ENCODE measurements at regions of chr10 and their contacts with region 1.

Region 1: GRCh38 chr10:5014936-5015335 is 11.3 kb upstream of the AKR1C2 start:
- DNase-seq: peak; percentile 48 to 60
- H3K4me3 ChIP-seq: no peak overlapping the region
- H3K4me3 Mint-ChIP-seq: no peak overlapping the region
- H3K27ac Mint-ChIP-seq: no peak overlapping the region
- H3K4me1 ChIP-seq: 0 out of 2 replicates have a peak, but pooled peaks cover 1% of the 10 kb centered on the region
- H3K4me1 Mint-ChIP-seq: no peaks in the 10 kb centered on the region
- H3K27me3 ChIP-seq: no peaks in the 10 kb centered on the region
- H3K27me3 Mint-ChIP-seq: no peaks in the 10 kb centered on the region
- CTCF ChIP-seq: peak; percentile 55 to 67

Region 2: GRCh38 chr10:5043716-5044115 is 28.8 kb after region 1 on chr10:
- CTCF ChIA-PET with region 1: no interaction called
- POLR2A ChIA-PET with region 1: no interaction called
- intact Hi-C with region 1: no loop called
- DNase-seq: no peak
- H3K4me3 ChIP-seq: no peak overlapping the region
- H3K4me3 Mint-ChIP-seq: no peak overlapping the region
- H3K27ac Mint-ChIP-seq: no peak overlapping the region
- H3K4me1 ChIP-seq: peaks cover 7% of the 10 kb centered on the region
- H3K4me1 Mint-ChIP-seq: peaks cover 18% of the 10 kb centered on the region
- H3K27me3 ChIP-seq: no peaks in the 10 kb centered on the region
- H3K27me3 Mint-ChIP-seq: no peaks in the 10 kb centered on the region
- CTCF ChIP-seq: no peak

Region 3: DNA sequence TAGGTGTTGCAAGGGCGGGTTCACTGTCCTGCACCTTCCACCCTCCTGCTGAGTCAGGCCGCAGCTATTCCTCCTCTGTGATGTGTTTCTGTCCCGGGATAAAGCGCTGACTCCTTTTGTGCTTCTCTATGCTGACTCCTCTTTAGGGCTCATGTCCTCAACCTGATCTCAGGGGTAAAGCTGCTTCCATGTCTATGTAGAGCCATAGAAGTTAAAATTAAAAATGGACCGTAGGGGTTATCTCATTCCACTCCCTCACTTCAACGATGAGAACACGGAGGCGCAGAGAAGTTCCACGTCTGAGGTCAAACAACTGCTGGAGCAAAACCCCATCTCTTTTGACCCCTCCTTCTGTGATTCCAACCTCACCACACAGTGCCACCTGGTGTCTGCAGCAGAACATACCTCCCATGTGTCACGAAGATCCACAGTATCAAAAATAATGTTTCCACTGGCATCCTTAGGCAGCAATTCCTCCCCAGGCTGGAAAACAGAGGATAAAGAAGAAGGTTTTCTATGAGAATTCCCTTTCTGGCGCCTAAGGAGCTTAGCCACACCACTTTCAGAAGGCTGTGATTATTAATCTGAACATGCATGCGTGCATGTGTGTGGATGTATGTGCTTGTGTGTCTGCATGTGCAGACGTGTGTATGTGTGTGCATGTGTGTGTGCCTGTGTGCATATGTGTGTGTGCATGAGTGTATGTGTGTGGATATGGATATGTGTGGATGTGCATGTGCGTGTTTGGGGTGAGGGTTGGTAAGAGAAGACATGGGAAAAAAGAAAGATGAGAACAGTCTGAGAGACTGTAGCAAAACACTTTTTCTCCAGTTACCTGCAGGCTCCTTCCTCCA is 268.6 kb after region 1 on chr10:
- CTCF ChIA-PET with region 1: no interaction called
- POLR2A ChIA-PET with region 1: no interaction called
- intact Hi-C with region 1: loop called (anchors 1 kb)
- DNase-seq: peak; percentile 81 to 83
- H3K4me3 ChIP-seq: no peak overlapping the region
- H3K4me3 Mint-ChIP-seq: peak overlapping the region; percentile 50
- H3K27ac Mint-ChIP-seq: peak overlapping the region; percentile 22
- H3K4me1 ChIP-seq: no peaks in the 10 kb centered on the region; the same call in 1 of the 2 replicates
- H3K4me1 Mint-ChIP-seq: peaks cover 7% of the 10 kb centered on the region
- H3K27me3 ChIP-seq: no peaks in the 10 kb centered on the region
- H3K27me3 Mint-ChIP-seq: peaks cover 7% of the 10 kb centered on the region
- CTCF ChIP-seq: peak; percentile 88 to 92

Region 4: GRCh38 chr10:5434017-5434753 is 419.2 kb after region 1 on chr10:
- CTCF ChIA-PET with region 1: no interaction called
- POLR2A ChIA-PET with region 1: no interaction called
- intact Hi-C with region 1: loop called (anchors 1 kb)
- DNase-seq: peak in 1 of 2 experiments; percentile 66
- H3K4me3 ChIP-seq: no peak overlapping the region
- H3K4me3 Mint-ChIP-seq: no peak overlapping the region
- H3K27ac Mint-ChIP-seq: no peak overlapping the region
- H3K4me1 ChIP-seq: no peaks in the 10 kb centered on the region
- H3K4me1 Mint-ChIP-seq: peaks cover 17% of the 10 kb centered on the region
- H3K27me3 ChIP-seq: no peaks in the 10 kb centered on the region
- H3K27me3 Mint-ChIP-seq: no peaks in the 10 kb centered on the region
- CTCF ChIP-seq: peak; percentile 81 to 86

Measured in Caco-2 (cell line).